ENCODE measurements at regions of chr2 and their contacts with region 1.

Region 1: GRCh38 chr2:219073413-219074129 is 12.8 kb upstream of the IHH start:
- DNase-seq: peak; percentile 80
- ATAC-seq: peak; percentile 66
- H3K4me3 ChIP-seq: no peak overlapping the region
- H3K27ac ChIP-seq: no peak overlapping the region
- H3K4me1 ChIP-seq: peaks cover 53% of the 10 kb centered on the region
- H3K27me3 ChIP-seq: no peaks in the 10 kb centered on the region
- CTCF ChIP-seq: peak; percentile 88
- EP300 ChIP-seq: no peak
- POLR2A ChIP-seq: no peak
- RAD21 ChIP-seq: peak; percentile 90

Region 2: DNA sequence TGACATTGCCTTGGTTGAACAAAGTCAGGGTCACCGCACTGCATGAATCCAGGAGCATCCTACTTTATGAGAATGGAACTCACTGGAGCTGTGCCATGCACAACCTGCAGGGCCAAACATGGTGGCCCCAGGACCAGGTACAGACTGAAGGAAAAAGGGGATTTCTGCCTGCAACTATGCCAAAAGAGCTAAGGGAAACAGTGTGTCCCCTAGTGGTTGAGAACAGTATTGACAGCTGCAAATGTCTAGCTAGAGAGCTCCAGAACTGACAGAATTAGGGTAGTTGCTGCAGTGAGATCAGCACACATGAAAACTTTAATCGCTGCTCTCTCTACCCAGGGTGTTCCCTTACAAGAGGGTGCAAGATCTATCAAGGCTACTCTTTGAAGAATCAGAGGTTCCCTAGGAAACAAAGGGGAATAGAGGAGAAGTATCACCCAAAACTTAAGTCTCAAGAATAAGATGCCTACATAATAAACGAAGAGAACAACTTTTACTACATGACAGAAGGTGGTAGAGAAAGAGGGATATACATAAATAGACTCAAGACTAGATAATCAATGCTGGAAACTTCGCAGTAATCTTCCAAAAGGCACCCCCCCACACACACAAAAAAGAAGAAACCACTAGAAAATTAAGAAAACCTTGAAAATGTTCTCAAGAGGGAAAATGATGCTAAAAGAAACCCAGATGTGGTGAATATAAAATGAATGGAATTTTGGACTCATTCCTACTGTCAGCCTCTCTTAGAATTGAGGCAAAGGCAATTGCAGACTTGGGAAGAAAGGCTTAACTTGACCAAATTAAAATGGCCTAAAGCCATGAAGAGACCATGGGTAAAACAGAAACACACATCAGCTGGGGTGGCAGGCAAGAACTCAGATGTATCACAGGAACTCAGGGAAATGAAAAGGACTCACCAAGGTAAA is 30.8 kb after region 1 on chr2:
- CTCF ChIA-PET with region 1: interaction called, 19 read pairs
- POLR2A ChIA-PET with region 1: interaction called, 6 read pairs
- in situ Hi-C with region 1: no loop called
- intact Hi-C with region 1: loop called (anchors 1 kb)
- DNase-seq: peak; percentile 66
- ATAC-seq: peak; percentile 97
- H3K4me3 ChIP-seq: no peak overlapping the region
- H3K27ac ChIP-seq: no peak overlapping the region
- H3K4me1 ChIP-seq: peaks cover 38% of the 10 kb centered on the region
- H3K27me3 ChIP-seq: no peaks in the 10 kb centered on the region
- CTCF ChIP-seq: peak; percentile 84
- EP300 ChIP-seq: no peak
- POLR2A ChIP-seq: no peak
- RAD21 ChIP-seq: peak; percentile 78

Region 3: DNA sequence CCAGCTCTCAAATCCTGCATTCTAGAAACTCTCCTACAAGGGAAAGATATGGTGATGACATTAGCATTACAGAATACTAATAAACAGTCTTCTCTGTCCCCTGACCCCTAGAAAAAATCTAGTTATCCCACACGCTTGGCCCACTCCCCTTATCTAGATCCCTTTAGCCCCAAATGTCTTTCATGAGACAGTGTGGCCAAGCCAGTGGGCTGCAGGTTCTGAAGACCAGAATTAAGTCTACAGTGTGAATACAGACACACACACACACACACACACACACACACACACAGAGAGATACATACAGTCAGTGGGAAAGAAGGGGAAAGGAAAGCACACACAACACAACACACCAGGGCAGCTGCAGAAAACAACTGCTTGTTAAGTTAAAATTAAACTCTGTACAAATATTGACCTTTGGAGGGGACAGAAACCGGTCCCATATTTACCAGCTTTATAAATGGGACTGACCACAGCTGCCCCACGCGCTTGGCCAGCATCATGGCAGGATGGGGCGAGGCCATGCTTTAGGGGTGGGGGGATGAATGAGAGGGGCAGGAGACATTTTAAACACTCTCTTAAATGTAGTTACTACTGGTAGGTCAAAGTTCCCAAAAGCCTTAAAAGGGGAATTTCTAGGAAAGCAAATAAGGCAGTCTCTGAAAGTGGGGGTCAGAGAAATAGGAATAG is 37.9 kb after region 1 on chr2:
- CTCF ChIA-PET with region 1: interaction called, 3 read pairs
- POLR2A ChIA-PET with region 1: interaction called, 45 read pairs
- in situ Hi-C with region 1: no loop called
- intact Hi-C with region 1: no loop called
- DNase-seq: peak; percentile 77
- ATAC-seq: peak; percentile 90
- H3K4me3 ChIP-seq: peak overlapping the region in 1 of 3 experiments; percentile 20; a peak in 2 of 6 replicates
- H3K27ac ChIP-seq: peak overlapping the region; percentile 17
- H3K4me1 ChIP-seq: peaks cover 83% of the 10 kb centered on the region
- H3K27me3 ChIP-seq: no peaks in the 10 kb centered on the region
- CTCF ChIP-seq: no peak
- EP300 ChIP-seq: peak in 1 of 2 experiments; percentile 84; a peak in 2 of 4 replicates
- POLR2A ChIP-seq: no peak
- RAD21 ChIP-seq: no peak

Region 4: GRCh38 chr2:219119422-219120043 is 46.0 kb after region 1 on chr2:
- CTCF ChIA-PET with region 1: interaction called, 43 read pairs
- POLR2A ChIA-PET with region 1: interaction called, 45 read pairs
- in situ Hi-C with region 1: no loop called
- intact Hi-C with region 1: loop called (anchors 1 kb)
- DNase-seq: peak; percentile 62
- ATAC-seq: peak; percentile 61
- H3K4me3 ChIP-seq: no peak overlapping the region
- H3K27ac ChIP-seq: no peak overlapping the region
- H3K4me1 ChIP-seq: peaks cover 69% of the 10 kb centered on the region
- H3K27me3 ChIP-seq: no peaks in the 10 kb centered on the region
- CTCF ChIP-seq: peak; percentile 95
- EP300 ChIP-seq: no peak
- POLR2A ChIP-seq: no peak
- RAD21 ChIP-seq: peak; percentile 87

Measured in HepG2 (cell line).